ENCODE measurements at regions of chr19 and their contacts with region 1.

Region 1: DNA sequence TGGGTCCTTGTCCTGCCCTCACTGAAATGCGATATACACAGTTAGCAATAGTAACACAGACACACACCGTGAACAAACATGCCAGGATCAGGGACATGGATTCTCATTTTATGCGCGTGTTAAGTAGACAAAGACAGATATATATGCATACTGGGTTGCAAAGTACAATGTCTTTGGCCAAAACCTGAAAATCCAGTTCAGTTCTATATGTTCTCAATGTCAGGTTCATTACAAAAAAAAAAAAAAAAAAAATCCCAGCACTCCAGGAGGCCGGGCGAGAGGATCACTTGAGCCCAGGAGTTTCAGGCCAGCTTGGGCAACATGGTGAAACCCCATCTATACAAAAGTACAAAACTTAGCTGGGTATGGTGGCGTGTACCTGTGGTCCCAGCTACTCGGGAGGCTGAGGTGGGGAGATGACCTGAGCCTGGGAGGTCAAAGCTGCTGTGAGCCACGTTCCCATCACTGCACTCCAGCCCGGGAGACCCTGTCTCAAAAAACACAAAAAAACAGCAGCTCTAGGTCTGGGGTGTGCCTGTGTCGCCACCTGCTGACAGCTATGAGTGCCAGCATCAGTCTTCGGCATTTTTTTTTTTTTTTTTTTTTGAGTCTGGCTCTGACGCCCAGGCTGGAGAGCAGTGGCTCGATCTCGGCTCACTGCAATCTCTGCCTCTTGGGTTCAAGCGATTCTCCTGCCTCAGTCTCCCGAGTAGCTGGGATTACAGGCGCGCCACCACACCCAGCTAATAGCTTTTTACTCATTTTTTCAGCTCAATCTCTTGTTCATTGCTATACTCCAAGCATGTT is 10.3 kb downstream of the AP2S1 start:
- DNase-seq: peak; percentile 63
- ATAC-seq: peak; percentile 65
- H3K4me3 ChIP-seq: no peak overlapping the region
- H3K27ac ChIP-seq: no peak overlapping the region
- H3K4me1 ChIP-seq: peaks cover 31% of the 10 kb centered on the region
- H3K27me3 ChIP-seq: no peaks in the 10 kb centered on the region
- CTCF ChIP-seq: peak; percentile 92
- EP300 ChIP-seq: no peak
- POLR2A ChIP-seq: no peak
- RAD21 ChIP-seq: peak; percentile 86

Region 2: DNA sequence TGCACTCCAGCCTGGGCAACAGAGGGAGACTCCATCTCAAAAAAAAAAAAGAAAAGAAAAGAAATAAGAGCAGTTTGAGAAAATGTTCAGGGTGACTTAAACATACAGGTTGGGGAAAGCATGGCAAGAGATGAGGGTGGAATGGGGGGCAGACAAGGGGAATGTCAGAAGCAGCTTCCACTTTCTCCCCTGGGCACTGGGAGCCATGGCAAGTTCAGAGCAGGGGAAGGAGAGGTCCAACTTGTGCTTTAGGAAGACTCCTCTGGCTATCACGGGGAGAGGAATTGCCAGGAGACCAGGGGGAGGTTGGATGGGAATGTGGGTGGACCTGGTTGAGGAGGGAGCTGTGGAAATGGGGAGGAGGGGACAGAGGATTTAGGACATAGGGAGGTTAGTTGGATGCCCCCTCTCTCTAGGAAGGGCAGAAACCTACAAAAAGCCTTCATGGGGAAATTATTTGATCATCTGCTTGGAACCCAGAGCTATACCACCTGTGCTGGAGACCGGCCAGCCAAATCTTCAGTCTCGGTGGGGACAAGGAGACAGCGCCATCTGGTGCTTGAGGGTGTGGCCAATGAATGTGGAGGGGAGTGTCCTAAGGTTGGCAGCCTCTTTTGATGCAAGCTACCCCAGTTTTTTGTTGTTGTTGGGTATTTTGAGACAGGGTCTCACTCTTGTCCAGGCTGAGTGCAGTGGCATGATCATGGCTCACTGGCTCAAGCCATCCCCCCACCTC is 86.8 kb before region 1 on chr19:
- CTCF ChIA-PET with region 1: interaction called, 21 read pairs
- POLR2A ChIA-PET with region 1: interaction called, 4 read pairs
- in situ Hi-C with region 1: loop called (anchors 5 kb)
- intact Hi-C with region 1: loop called (anchors 5 kb)
- DNase-seq: peak; percentile 48
- ATAC-seq: peak; percentile 66
- H3K4me3 ChIP-seq: no peak overlapping the region
- H3K27ac ChIP-seq: no peak overlapping the region
- H3K4me1 ChIP-seq: no peaks in the 10 kb centered on the region
- H3K27me3 ChIP-seq: no peaks in the 10 kb centered on the region
- CTCF ChIP-seq: peak; percentile 67
- EP300 ChIP-seq: no peak
- POLR2A ChIP-seq: no peak
- RAD21 ChIP-seq: no peak

Region 3: DNA sequence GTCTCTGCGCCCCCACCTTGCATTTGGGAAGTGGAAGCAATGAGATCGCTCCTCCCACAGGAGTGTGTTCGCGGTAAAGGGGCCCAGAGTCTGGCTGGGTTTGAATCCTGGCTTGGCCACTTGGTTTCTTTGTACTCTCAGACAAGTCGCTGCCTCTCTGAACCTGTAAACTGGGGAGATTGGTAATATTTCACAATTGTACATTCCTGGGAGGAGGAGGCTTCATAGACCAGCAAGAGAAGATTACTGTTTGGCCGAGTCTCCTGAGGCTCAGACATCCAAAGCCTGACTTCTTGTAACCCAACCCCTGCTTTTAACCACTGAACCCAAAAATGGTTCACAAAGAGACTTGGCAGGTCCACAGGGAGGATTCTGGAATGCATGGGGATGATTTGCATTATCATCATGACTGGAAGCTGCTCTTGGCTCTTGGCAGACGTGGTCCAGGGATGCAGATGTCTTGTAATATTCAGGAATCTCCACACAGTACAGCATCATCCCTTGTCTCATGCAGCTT is 80.5 kb before region 1 on chr19:
- CTCF ChIA-PET with region 1: interaction called, 21 read pairs
- POLR2A ChIA-PET with region 1: interaction called, 4 read pairs
- in situ Hi-C with region 1: no loop called
- intact Hi-C with region 1: loop called (anchors 5 kb)
- DNase-seq: no peak
- ATAC-seq: peak; percentile 14; the same call in 1 of the 3 replicates
- H3K4me3 ChIP-seq: no peak overlapping the region; a peak in 1 of 6 replicates
- H3K27ac ChIP-seq: peak overlapping the region; percentile 30
- H3K4me1 ChIP-seq: peaks cover 48% of the 10 kb centered on the region
- H3K27me3 ChIP-seq: no peaks in the 10 kb centered on the region
- CTCF ChIP-seq: 0 out of 2 replicates have a peak, but pooled peaks have one; percentile 0
- EP300 ChIP-seq: no peak
- POLR2A ChIP-seq: no peak
- RAD21 ChIP-seq: no peak

Region 4: GRCh38 chr19:46772170-46773017 is 67.9 kb before region 1 on chr19:
- CTCF ChIA-PET with region 1: no interaction called
- POLR2A ChIA-PET with region 1: no interaction called
- in situ Hi-C with region 1: no loop called
- intact Hi-C with region 1: loop called (anchors 5 kb)
- DNase-seq: no peak
- ATAC-seq: no peak
- H3K4me3 ChIP-seq: no peak overlapping the region
- H3K27ac ChIP-seq: no peak overlapping the region
- H3K4me1 ChIP-seq: peaks cover 50% of the 10 kb centered on the region
- H3K27me3 ChIP-seq: no peaks in the 10 kb centered on the region
- CTCF ChIP-seq: no peak
- EP300 ChIP-seq: no peak
- POLR2A ChIP-seq: no peak
- RAD21 ChIP-seq: no peak

Region 5: DNA sequence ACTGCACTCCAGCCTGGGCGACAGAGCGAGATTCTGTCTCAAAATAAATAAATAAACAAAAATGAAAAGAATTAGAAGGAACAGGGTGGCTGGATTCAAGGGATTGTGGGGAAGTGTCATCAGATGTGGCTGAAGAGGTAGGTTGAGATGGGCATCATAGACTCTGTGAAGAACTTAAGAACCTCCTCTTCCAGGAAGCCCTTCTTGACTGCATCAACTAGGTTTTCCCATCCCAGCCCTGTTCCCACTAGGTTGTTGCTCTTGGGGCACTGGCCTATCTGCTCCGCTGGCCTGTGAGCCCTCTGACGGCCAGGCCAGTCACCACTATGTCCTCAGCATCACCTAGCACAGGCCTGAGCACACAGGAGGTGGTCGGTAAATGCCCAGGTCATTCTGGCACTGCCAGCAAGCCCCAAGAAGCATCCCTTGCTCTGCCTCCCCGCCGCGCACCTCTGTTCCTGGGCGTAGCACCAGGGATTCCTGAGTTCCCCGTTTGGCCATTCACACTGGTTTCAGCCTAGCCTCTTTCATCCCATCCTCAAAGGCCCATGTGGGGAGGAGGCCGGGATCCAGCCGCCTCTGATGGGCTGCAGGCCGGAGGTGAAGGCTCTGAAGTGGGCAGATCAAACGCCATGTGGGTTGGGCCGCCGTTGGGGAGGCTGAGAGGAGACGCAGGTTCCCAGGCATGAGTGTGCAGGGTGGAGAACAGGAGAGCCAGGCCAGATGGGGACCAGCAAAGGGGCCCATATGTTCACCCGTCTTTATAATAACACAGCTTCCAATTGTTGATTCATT is 24.3 kb before region 1 on chr19:
- CTCF ChIA-PET with region 1: no interaction called
- POLR2A ChIA-PET with region 1: no interaction called
- in situ Hi-C with region 1: no loop called
- intact Hi-C with region 1: no loop called
- DNase-seq: peak; percentile 67
- ATAC-seq: peak; percentile 43
- H3K4me3 ChIP-seq: no peak overlapping the region
- H3K27ac ChIP-seq: no peak overlapping the region
- H3K4me1 ChIP-seq: peaks cover 65% of the 10 kb centered on the region
- H3K27me3 ChIP-seq: peaks cover 0 to 14% of the 10 kb centered on the region in 2 experiments; a peak in 4 of 5 replicates
- CTCF ChIP-seq: 0 out of 2 replicates have a peak, but pooled peaks have one; percentile 15
- EP300 ChIP-seq: no peak
- POLR2A ChIP-seq: no peak
- RAD21 ChIP-seq: no peak